Gastrocnemius medialis (tissue), 4 donors: ENCODE measurements at regions of chr6 and their contacts with region 1.

Region 1: DNA sequence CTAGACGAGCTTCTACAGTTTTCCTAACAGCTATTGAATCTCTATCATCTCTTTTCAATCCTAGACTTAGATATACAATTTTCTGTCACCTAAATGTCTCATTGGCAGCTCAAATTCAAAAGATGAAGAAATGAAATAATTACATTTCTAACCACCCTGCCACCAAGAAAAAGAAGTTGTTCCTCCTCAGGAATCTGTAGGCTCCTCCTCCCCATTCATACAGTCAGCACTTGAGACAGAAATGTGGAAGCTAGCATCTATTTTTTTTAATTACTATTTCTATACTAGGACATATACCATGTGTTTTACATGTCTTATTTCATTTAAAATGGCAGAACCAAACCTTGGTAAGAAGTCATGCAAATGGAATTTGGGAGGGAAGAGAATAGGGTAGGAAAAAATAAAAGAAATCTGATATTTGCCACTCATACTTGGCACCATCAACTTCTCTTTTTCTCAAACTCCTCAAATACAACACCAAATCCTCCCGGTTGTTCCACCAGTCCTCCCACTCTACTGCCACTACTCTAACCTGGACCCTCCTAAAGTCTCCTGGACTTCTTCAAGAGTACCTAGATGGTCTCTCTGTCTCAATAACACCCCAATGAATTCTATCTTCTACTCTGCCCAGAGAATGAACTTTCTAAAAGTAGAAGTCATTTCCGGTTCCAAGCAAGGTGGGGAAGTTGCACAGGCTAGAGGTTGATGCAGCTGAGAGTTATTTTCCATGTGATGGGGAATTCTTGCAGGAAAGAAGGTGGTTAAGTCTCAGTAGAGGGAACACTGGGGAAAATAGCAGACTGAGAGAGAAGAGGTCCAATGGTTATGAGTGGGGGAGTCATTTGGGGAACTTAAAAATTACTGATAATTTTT is 54.1 kb downstream of the ATXN1 start:
- DNase-seq: no peak
- ATAC-seq: no peak
- H3K4me3 ChIP-seq: no peak overlapping the region
- H3K27ac ChIP-seq: no peak overlapping the region
- H3K4me1 ChIP-seq: peaks cover 30 to 35% of the 10 kb centered on the region in 2 donors
- H3K27me3 ChIP-seq: no peaks in the 10 kb centered on the region
- CTCF ChIP-seq: no peak
- POLR2A ChIP-seq: no peak

Region 2: GRCh38 chr6:16108921-16109658 is 598.1 kb before region 1 on chr6:
- in situ Hi-C with region 1: no loop called
- intact Hi-C with region 1: no loop called
- DNase-seq: no peak
- ATAC-seq: peak; percentile 18 to 47
- H3K4me3 ChIP-seq: no peak overlapping the region
- H3K27ac ChIP-seq: peak overlapping the region; percentile 71 to 85 (median 82)
- H3K4me1 ChIP-seq: peaks cover 56% of the 10 kb centered on the region in 2 donors
- H3K27me3 ChIP-seq: no peaks in the 10 kb centered on the region
- CTCF ChIP-seq: no peak
- POLR2A ChIP-seq: no peak

Region 3: DNA sequence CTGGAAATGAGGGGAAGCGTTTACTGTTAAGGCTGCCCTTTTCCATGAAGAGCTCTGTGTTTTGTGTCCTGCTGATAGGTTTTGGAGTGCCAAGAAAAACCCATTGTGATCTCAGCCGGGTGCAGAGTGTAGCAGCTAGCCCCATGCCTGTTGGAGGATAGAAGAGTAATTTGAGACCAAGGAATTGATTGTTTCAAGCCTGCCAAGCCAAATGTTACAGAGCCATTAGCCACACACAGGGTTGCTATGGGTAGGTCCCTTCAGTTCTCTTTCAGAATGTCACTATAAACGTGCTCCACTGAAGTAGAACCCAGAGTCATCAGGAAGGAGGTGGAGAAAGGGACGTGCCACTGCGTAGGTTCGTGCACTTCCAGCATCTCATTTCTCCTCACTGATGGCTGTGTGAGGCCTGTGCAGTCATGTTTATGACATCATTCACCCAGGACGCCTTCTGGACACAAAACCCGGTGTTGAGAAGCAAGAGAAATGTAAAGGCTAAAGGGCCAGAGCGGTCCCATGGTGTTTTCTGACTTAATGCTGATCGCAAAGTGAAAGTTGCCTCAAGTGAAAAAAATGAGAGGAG is 462.2 kb before region 1 on chr6:
- in situ Hi-C with region 1: no loop called
- intact Hi-C with region 1: no loop called
- DNase-seq: no peak
- ATAC-seq: no peak
- H3K4me3 ChIP-seq: peak overlapping the region in 2 of 4 donors; percentile 6 to 11
- H3K27ac ChIP-seq: peak overlapping the region; percentile 97 to 99 (median 98)
- H3K4me1 ChIP-seq: peaks cover 62 to 67% of the 10 kb centered on the region in 2 donors
- H3K27me3 ChIP-seq: no peaks in the 10 kb centered on the region
- CTCF ChIP-seq: no peak
- POLR2A ChIP-seq: no peak

Region 4: GRCh38 chr6:16719488-16719887 is 12.3 kb after region 1 on chr6:
- in situ Hi-C with region 1: no loop called
- intact Hi-C with region 1: loop called (anchors 1 kb)
- DNase-seq: no peak
- ATAC-seq: no peak
- H3K4me3 ChIP-seq: no peak overlapping the region
- H3K27ac ChIP-seq: no peak overlapping the region
- H3K4me1 ChIP-seq: peaks cover 37 to 57% of the 10 kb centered on the region in 2 donors
- H3K27me3 ChIP-seq: no peaks in the 10 kb centered on the region
- CTCF ChIP-seq: no peak
- POLR2A ChIP-seq: no peak

Region 5: DNA sequence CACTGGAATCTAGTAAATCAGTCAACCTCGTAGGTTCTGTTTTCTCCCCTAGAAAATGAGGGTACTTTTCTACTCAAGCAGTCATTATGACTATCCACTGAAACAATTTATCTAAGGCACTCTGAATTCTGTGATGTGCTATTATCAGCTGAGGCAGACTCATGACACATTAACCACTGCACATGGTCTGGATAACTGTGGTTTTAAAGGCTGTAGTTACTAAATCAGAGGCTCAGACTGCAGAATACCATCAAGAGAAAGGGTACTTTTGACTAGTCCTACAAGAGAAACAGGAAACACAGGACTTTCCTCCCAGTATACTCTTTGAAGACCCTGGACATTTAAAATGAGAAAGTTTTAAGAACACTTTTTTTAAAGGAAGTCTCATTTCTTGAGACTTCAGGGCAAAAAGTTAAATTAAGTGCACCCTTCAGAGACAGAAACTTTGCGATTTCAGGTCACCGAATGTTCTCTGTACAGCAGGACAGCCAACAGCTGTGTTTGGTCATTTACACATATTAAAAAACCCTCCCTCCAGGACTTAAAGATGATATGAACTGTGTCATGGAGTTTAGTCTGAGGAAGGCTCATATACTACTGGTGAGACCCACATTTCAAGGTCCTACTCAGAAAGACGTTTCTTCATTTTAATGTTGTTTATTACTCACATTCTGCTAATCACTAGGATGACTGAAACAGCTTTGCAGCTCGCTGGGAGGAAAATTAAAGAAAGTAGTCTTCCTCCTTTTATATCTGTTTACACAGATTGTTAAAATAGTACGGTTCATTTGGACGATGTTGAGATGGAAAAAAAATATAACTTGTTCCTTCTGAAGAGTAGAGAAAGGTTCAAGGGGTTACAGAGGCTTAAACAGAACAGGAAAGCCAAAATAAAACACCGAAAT is 34.2 kb after region 1 on chr6:
- in situ Hi-C with region 1: no loop called
- intact Hi-C with region 1: no loop called
- DNase-seq: no peak
- ATAC-seq: peak; percentile 55 to 83
- H3K4me3 ChIP-seq: no peak overlapping the region
- H3K27ac ChIP-seq: peak overlapping the region; percentile 69 to 83 (median 80)
- H3K4me1 ChIP-seq: peaks cover 64 to 68% of the 10 kb centered on the region in 2 donors
- H3K27me3 ChIP-seq: no peaks in the 10 kb centered on the region
- CTCF ChIP-seq: no peak
- POLR2A ChIP-seq: peak in 1 of 2 donors; percentile 60